ENCODE measurements at regions of chr2 and their contacts with region 1.

Region 1: GRCh38 chr2:182980115-182980514 is 58.1 kb downstream of the NCKAP1 start:
- DNase-seq: no peak
- ATAC-seq: peak in 1 of 2 donors; percentile 75
- H3K4me3 ChIP-seq: no peak overlapping the region
- H3K27ac ChIP-seq: peak overlapping the region in 1 of 4 donors; percentile 36
- H3K4me1 ChIP-seq: no peaks in the 10 kb centered on the region
- H3K27me3 ChIP-seq: no peaks in the 10 kb centered on the region
- CTCF ChIP-seq: peak; percentile 40 to 70 (median 67)
- POLR2A ChIP-seq: no peak

Region 2: GRCh38 chr2:182763311-182763912 is 216.7 kb before region 1 on chr2:
- in situ Hi-C with region 1: loop called in 2 of 4 experiments (anchors 5 kb)
- intact Hi-C with region 1: loop called (anchors 2 kb)
- DNase-seq: no peak
- ATAC-seq: peak; percentile 60 to 69
- H3K4me3 ChIP-seq: no peak overlapping the region
- H3K27ac ChIP-seq: peak overlapping the region in 1 of 4 donors; percentile 21
- H3K4me1 ChIP-seq: peaks cover 3 to 10% of the 10 kb centered on the region in 2 donors
- H3K27me3 ChIP-seq: no peaks in the 10 kb centered on the region
- CTCF ChIP-seq: peak; percentile 35 to 69 (median 51)
- POLR2A ChIP-seq: no peak

Region 3: GRCh38 chr2:182784777-182785176 is 195.3 kb before region 1 on chr2:
- in situ Hi-C with region 1: loop called in 3 of 4 experiments (anchors 5 to 10 kb)
- intact Hi-C with region 1: loop called (anchors 1 kb)
- DNase-seq: no peak
- ATAC-seq: peak; percentile 54 to 78
- H3K4me3 ChIP-seq: no peak overlapping the region
- H3K27ac ChIP-seq: no peak overlapping the region
- H3K4me1 ChIP-seq: no peaks in the 10 kb centered on the region
- H3K27me3 ChIP-seq: no peaks in the 10 kb centered on the region
- CTCF ChIP-seq: peak; percentile 29 to 64 (median 59)
- POLR2A ChIP-seq: no peak

Region 4: GRCh38 chr2:183010112-183010511 is 30.0 kb after region 1 on chr2:
- in situ Hi-C with region 1: no loop called
- intact Hi-C with region 1: no loop called
- DNase-seq: peak in 1 of 2 donors; percentile 31
- ATAC-seq: peak; percentile 39 to 85
- H3K4me3 ChIP-seq: no peak overlapping the region
- H3K27ac ChIP-seq: peak overlapping the region in 1 of 4 donors; percentile 4
- H3K4me1 ChIP-seq: peaks cover 61 to 70% of the 10 kb centered on the region in 2 donors
- H3K27me3 ChIP-seq: no peaks in the 10 kb centered on the region
- CTCF ChIP-seq: no peak
- POLR2A ChIP-seq: no peak